ENCODE measurements at regions of chrX and their contacts with region 1.

Region 1: DNA sequence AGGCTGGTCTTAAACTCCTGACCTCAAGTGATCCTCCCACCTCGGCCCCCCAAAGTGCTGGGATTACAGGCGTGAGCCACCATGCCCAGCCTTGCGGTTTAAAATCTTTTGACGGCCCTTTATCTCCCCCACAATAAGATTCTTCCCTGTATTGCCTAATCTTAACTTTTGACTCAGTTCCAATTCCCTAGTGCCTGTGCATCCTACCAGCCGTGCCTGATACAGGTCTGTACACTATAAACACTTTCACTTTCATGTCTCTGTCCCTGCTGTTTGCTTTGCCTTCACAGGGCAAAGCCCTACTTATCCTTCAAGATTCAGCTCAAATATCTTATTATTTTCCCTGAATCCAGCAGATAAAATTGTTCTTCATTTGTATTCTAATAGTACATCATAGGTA is 74.6 kb downstream of the WDR44 start:
- DNase-seq: no peak
- ATAC-seq: peak; percentile 84
- H3K4me3 ChIP-seq: no peak overlapping the region
- H3K27ac ChIP-seq: no peak overlapping the region
- H3K4me1 ChIP-seq: no peaks in the 10 kb centered on the region
- H3K27me3 ChIP-seq: no peaks in the 10 kb centered on the region
- CTCF ChIP-seq: no peak
- EP300 ChIP-seq: no peak
- POLR2A ChIP-seq: no peak
- RAD21 ChIP-seq: no peak

Region 2: DNA sequence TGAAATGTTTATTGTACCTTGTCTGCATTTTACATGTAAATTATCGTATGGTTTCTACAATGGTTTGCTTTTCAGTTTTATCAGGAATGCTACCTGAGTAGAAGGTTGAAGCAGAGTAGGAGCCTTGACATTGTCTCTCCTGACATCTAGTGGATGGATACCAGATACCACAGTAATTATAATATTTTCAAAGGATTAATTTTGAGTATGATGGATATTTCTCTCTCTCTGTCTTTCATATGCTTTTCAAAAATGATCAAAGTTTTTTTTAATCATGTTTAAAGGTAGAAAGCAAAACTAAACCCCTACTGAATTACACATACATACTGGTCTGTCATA is 194.4 kb before region 1 on chrX:
- CTCF ChIA-PET with region 1: no interaction called
- POLR2A ChIA-PET with region 1: no interaction called
- RAD21 ChIA-PET with region 1: no interaction called
- SMC1A ChIA-PET with region 1: no interaction called
- in situ Hi-C with region 1: no loop called
- intact Hi-C with region 1: no loop called
- DNase-seq: no peak
- ATAC-seq: peak; percentile 87
- H3K4me3 ChIP-seq: no peak overlapping the region
- H3K27ac ChIP-seq: no peak overlapping the region
- H3K4me1 ChIP-seq: no peaks in the 10 kb centered on the region
- H3K27me3 ChIP-seq: no peaks in the 10 kb centered on the region
- CTCF ChIP-seq: peak; percentile 35 to 51 (median 39); a peak in 5 of 6 replicates
- EP300 ChIP-seq: no peak
- POLR2A ChIP-seq: no peak
- RAD21 ChIP-seq: peak; percentile 81

Region 3: GRCh38 chrX:118286066-118286762 is 134.2 kb before region 1 on chrX:
- CTCF ChIA-PET with region 1: no interaction called
- POLR2A ChIA-PET with region 1: no interaction called
- RAD21 ChIA-PET with region 1: no interaction called
- SMC1A ChIA-PET with region 1: no interaction called
- in situ Hi-C with region 1: no loop called
- intact Hi-C with region 1: no loop called
- DNase-seq: no peak
- ATAC-seq: no peak
- H3K4me3 ChIP-seq: no peak overlapping the region
- H3K27ac ChIP-seq: no peak overlapping the region
- H3K4me1 ChIP-seq: no peaks in the 10 kb centered on the region
- H3K27me3 ChIP-seq: no peaks in the 10 kb centered on the region
- CTCF ChIP-seq: no peak
- EP300 ChIP-seq: no peak
- POLR2A ChIP-seq: no peak
- RAD21 ChIP-seq: no peak

Region 4: GRCh38 chrX:118345401-118346257 is 74.8 kb before region 1 on chrX and contains the start of gene WDR44:
- CTCF ChIA-PET with region 1: no interaction called
- POLR2A ChIA-PET with region 1: no interaction called
- RAD21 ChIA-PET with region 1: interaction called, 4 read pairs
- SMC1A ChIA-PET with region 1: no interaction called
- in situ Hi-C with region 1: no loop called
- intact Hi-C with region 1: loop called (anchors 5 kb)
- DNase-seq: peak; percentile 82
- ATAC-seq: peak; percentile 89
- H3K4me3 ChIP-seq: peak within 1 kb of the TSS; percentile 73
- H3K27ac ChIP-seq: peak within 1 kb of the TSS; percentile 81
- H3K4me1 ChIP-seq: peaks cover 5% of the 10 kb centered on the region; the same call in 1 of the 2 replicates
- H3K27me3 ChIP-seq: no peaks in the 10 kb centered on the region
- CTCF ChIP-seq: no peak
- EP300 ChIP-seq: no peak
- POLR2A ChIP-seq: peak; percentile 86
- RAD21 ChIP-seq: no peak
- polyA plus RNA-seq, gene WDR44: 3.4 to 4.2 TPM

Region 5: GRCh38 chrX:118459494-118459893 is 39.0 kb after region 1 on chrX:
- CTCF ChIA-PET with region 1: no interaction called
- POLR2A ChIA-PET with region 1: no interaction called
- RAD21 ChIA-PET with region 1: no interaction called
- SMC1A ChIA-PET with region 1: no interaction called
- in situ Hi-C with region 1: no loop called
- intact Hi-C with region 1: no loop called
- DNase-seq: peak; percentile 2
- ATAC-seq: peak; percentile 81
- H3K4me3 ChIP-seq: no peak overlapping the region
- H3K27ac ChIP-seq: no peak overlapping the region
- H3K4me1 ChIP-seq: no peaks in the 10 kb centered on the region
- H3K27me3 ChIP-seq: no peaks in the 10 kb centered on the region
- CTCF ChIP-seq: peak; percentile 43 to 60 (median 44); a peak in 4 of 6 replicates
- EP300 ChIP-seq: no peak
- POLR2A ChIP-seq: no peak
- RAD21 ChIP-seq: peak; percentile 80